Heart right ventricle (tissue), 16 donors: ENCODE measurements at regions of chr10 and their contacts with region 1.

Region 1: GRCh38 chr10:38094158-38094920 is at the start of gene ZNF37A:
- DNase-seq: peak; percentile 88 to 95
- ATAC-seq: peak; percentile 98 to 100 (median 99)
- H3K4me3 ChIP-seq: peak within 1 kb of the TSS; percentile 66 to 100 (median 81)
- H3K27ac ChIP-seq: peak within 1 kb of the TSS; percentile 51 to 96 (median 82)
- H3K4me1 ChIP-seq: peaks cover 0 to 19% (median 11%) of the 10 kb centered on the region in 9 donors
- H3K27me3 ChIP-seq: no peaks in the 10 kb centered on the region
- CTCF ChIP-seq: peak in 1 of 9 donors; percentile 5
- total RNA-seq, gene ZNF37A: 6.7 to 9.2 (median 7.4) TPM

Region 2: DNA sequence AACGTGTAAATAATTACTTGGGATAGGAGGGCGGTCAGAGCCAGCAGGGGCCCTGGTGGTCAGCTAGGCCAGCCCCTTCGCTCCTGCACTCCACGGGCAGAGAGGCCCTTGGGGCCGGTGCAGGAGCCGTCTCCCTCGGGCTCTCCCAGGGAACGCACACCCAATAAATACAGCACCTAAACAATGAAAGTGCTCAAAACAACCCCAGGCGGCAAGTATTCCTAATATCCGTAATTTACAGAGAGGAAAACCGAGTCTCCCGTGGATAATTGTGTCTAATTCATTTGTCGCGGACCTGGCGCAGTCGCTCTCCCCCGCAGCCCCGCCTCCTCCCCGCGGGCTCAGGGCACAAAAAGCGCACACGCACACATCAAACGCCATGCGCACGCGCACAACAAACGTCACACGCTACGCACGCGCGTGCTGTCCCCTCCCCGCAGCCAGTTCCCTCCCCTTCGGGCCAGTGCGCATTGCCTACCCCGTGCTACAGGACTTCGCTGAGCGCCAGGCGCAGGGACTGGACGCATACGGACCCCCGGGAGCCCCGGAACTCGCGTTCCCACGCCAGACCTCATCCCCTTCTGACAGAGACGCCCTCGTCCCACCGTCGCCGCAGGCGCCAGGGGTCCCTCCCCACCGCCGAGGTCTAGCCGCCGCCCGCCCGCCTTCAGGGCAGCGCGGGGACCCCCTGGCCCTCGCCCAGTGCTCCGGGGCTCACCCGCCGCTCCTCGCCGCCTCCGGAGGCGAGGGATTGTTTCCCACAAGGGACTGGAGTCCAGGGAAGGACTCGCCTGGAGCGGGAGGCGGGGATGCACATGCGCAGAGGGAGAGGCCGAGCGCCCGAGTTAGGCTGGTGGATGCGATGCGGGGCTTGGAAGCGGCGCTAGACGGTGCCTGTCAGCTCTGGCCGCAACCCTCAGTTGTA is 236.8 kb before region 1 on chr10 and contains the start of gene ZNF248:
- intact Hi-C with region 1: loop called in 5 of 10 experiments (anchors 5 to 10 kb)
- DNase-seq: peak; percentile 96 to 97
- ATAC-seq: peak; percentile 99 to 100 (median 99)
- H3K4me3 ChIP-seq: peak within 1 kb of the TSS; percentile 57 to 98 (median 88)
- H3K27ac ChIP-seq: peak within 1 kb of the TSS; percentile 99 to 100 (median 100)
- H3K4me1 ChIP-seq: peaks cover 0 to 36% (median 32%) of the 10 kb centered on the region in 9 donors
- H3K27me3 ChIP-seq: no peaks in the 10 kb centered on the region
- CTCF ChIP-seq: peak in 3 of 9 donors; percentile 20 to 22 (median 20)
- total RNA-seq, gene ZNF248: 7.4 to 13.9 (median 9.1) TPM

Region 3: GRCh38 chr10:37896436-37896835 is 197.9 kb before region 1 on chr10:
- intact Hi-C with region 1: no loop called
- DNase-seq: no peak
- ATAC-seq: no peak
- H3K4me3 ChIP-seq: no peak overlapping the region
- H3K27ac ChIP-seq: no peak overlapping the region
- H3K4me1 ChIP-seq: no peaks in the 10 kb centered on the region
- H3K27me3 ChIP-seq: no peaks in the 10 kb centered on the region
- CTCF ChIP-seq: no peak

Region 4: DNA sequence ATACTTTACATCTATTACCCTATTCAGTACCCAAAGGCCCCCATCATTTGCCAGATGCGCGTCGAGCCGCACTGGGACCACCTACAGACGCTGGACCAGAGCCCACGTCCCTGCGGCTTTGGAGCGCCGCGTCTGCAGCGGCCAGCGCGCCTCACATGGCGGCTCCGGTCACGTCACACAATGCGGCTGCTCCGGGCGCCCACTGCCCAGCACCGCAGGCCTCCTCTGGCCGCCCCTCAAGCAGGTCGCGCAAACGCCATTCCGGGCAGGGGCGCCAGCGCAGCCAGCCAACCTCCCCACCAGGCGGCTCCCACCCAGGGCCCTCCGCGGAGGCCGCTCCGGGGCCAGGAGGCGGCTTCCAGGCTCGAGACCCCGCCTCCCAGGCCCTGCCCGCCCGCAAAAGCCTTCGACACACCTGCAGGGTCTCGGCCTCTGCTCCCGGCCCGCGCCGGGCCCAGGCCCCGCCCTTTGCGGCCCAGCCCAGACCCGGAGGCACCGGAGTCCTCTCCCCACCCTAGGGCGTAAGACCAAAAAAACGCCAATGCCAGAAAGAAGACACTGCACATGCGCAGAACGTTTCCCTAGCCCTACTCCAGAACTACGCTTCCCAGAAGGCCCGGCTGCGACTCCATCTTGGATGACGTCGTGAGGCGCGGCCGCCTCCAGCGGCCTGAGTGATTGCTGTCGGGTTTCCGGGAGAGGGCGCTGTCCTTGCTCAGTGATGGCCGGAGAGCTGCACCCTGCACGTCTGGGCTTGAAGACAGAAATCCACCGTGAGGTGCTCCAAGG is 118.1 kb before region 1 on chr10 and contains the start of gene ZNF25:
- intact Hi-C with region 1: loop called in 6 of 10 experiments (anchors 1 to 10 kb)
- DNase-seq: peak; percentile 96 to 99
- ATAC-seq: peak; percentile 98 to 99 (median 99)
- H3K4me3 ChIP-seq: peak within 1 kb of the TSS; percentile 71 to 96 (median 89)
- H3K27ac ChIP-seq: peak within 1 kb of the TSS; percentile 90 to 100 (median 99)
- H3K4me1 ChIP-seq: peaks cover 0 to 20% (median 12%) of the 10 kb centered on the region in 9 donors
- H3K27me3 ChIP-seq: no peaks in the 10 kb centered on the region
- CTCF ChIP-seq: peak; percentile 71 to 92 (median 86)
- total RNA-seq, gene ZNF25: 15.2 to 22.9 (median 20.4) TPM

Region 5: DNA sequence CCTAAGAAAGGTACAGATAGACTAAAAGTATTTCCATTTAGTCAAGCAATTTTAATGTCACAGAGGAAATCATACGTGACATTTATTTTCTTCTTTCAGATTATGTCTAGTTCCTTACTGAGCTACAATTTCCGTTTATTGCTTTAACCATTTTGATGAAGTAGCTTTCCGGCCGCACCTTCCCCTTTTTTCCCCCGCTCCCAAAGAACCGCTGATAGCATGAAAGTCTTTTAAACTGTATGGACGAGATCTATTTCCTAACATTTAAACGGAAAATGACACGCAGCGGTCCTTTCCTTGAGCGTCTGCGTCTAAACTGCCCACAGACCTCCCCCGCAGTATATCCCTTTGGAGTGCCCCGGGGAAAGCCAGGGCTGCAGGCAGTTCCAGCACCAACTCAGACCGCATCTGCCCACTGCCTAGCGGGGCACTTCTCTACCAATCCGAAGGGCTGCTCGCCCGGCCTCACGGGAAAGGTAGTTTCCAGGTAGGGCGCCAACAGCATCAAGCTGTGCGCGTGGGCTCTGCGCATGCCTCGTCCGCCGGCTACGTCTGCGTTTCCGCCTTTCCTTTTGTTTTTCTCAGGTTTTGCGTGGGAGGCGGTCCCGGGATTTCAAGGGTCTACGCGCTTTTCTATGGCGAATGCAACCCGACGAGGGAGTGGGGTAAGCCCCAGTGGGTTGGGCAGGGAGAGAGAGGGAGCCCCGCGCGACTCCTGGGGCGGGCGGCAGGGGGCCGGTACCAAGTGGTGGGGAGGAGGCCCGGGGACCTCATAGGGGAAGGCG is 84.0 kb before region 1 on chr10 and contains the start of gene ZNF33A:
- intact Hi-C with region 1: loop called in 5 of 10 experiments (anchors 2 to 10 kb)
- DNase-seq: peak; percentile 89 to 92
- ATAC-seq: peak; percentile 92 to 99 (median 96)
- H3K4me3 ChIP-seq: peak within 1 kb of the TSS; percentile 29 to 80 (median 70)
- H3K27ac ChIP-seq: peak within 1 kb of the TSS; percentile 94 to 99 (median 98)
- H3K4me1 ChIP-seq: peaks cover 0 to 17% (median 9%) of the 10 kb centered on the region in 9 donors
- H3K27me3 ChIP-seq: no peaks in the 10 kb centered on the region
- CTCF ChIP-seq: peak in 1 of 9 donors; percentile 36
- total RNA-seq, gene ZNF33A: 16.8 to 27.7 (median 23.2) TPM

Region 6: DNA sequence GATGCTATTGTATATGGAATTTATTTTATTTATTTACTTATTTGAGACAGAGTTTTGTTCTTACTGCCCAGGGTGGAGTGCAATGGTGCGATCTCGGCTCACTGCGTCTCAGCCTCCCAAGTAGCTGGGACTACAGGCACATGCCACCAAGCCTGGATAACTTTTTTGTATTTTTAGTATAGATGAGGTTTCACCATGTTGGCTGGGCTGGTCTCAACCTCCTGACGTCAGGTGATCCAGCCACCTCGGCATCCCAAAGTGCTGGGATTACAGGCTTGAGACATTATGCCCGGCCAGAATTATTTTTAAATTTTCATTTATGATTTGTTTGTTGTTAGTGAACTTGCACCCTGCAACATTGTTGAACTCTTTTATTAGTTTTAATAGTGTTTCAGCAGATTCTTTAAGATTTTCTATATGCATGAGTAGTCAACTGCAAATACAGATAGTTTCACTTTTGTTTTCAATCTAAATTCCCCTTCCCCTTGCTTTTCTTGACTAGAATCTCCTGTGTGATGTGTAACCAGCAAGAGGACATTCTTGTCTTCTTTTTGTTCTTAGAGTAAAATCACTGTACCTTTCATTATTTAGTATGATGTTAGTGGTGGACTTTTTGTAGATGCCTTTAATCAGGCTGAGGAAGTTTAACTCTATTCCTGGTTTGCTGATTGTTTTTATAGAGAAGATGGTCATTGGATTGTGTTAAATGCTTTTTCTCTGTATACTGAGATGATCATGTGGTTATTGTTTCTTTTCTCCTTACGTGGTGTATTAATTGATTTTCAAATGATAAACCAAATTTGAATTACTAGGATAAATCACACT is 56.0 kb before region 1 on chr10:
- intact Hi-C with region 1: loop called in 1 of 10 experiments (anchors 10 kb)
- DNase-seq: no peak
- ATAC-seq: no peak
- H3K4me3 ChIP-seq: peak overlapping the region in 4 of 10 donors; percentile 23 to 29 (median 24)
- H3K27ac ChIP-seq: peak overlapping the region in 3 of 10 donors; percentile 16 to 54 (median 26)
- H3K4me1 ChIP-seq: peaks cover 0 to 13% (median 0%) of the 10 kb centered on the region in 9 donors
- H3K27me3 ChIP-seq: no peaks in the 10 kb centered on the region
- CTCF ChIP-seq: no peak

Region 7: DNA sequence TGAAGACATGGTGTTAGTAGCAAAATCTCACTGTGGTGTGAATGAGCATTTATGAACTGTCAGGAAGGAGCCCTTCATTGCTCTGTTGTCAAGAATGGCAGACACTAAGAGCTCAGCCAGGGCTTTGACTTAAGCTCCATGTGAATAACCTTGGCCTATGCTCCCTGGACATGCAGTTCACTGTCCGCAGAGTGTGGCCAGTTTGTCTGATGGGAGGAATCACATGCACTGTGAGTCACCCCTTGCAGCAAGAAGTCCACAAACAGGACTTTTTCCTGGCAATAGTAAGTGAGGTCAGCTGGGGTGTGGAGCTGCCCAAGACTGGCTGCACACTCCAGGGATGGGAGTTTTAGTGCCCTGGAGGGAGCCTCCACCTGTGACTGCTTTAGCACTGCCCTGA is 49.2 kb after region 1 on chr10:
- intact Hi-C with region 1: no loop called
- DNase-seq: no peak
- ATAC-seq: no peak
- H3K4me3 ChIP-seq: no peak overlapping the region
- H3K27ac ChIP-seq: no peak overlapping the region
- H3K4me1 ChIP-seq: no peaks in the 10 kb centered on the region
- H3K27me3 ChIP-seq: no peaks in the 10 kb centered on the region
- CTCF ChIP-seq: no peak

Region 8: GRCh38 chr10:38184476-38184875 is 90.1 kb after region 1 on chr10:
- intact Hi-C with region 1: no loop called
- DNase-seq: no peak
- ATAC-seq: no peak
- H3K4me3 ChIP-seq: no peak overlapping the region
- H3K27ac ChIP-seq: no peak overlapping the region
- H3K4me1 ChIP-seq: no peaks in the 10 kb centered on the region
- H3K27me3 ChIP-seq: no peaks in the 10 kb centered on the region
- CTCF ChIP-seq: no peak